Colonic mucosa (tissue), 4 donors: ENCODE measurements at regions of chr11 and their contacts with region 1.

Region 1: GRCh38 chr11:69918938-69919650 is 99.9 kb upstream of the FGF3 start:
- DNase-seq: peak; percentile 73
- H3K4me3 ChIP-seq: no peak overlapping the region
- H3K27ac ChIP-seq: no peak overlapping the region
- H3K4me1 ChIP-seq: no peaks in the 10 kb centered on the region
- H3K27me3 ChIP-seq: no peaks in the 10 kb centered on the region
- CTCF ChIP-seq: peak; percentile 98

Region 2: DNA sequence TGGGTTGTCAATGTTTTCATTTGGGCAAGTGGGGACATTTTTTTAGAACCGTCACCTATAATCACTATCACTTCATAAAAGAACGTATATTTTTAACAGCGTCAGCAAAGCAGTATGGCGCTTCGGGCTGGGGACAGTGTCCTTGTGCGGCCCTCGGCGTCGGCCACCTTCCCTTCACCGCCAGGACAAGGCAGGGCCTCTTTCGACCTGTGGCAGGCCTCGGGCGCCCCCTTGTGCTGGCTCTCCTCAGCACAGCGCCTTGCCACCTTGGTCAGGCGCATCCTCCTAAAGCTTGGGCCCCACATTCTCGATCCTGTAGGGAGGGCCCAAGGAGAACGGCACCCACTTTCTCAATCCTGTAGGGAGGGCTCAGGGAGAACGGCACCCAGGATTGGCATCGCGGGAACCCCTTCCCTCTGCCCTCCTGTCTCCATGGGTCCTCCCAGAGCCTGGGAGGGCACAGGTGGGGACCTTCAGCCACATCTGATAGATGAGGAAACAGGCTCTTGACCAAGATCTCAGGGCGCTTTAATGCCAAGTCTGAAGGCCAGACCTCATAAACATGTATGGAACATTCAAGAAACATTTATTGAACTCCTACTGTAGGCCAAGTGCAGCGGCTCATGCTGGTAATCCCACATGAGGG is 272.5 kb after region 1 on chr11:
- intact Hi-C with region 1: loop called (anchors 2 kb)
- DNase-seq: peak; percentile 72
- H3K4me3 ChIP-seq: no peak overlapping the region
- H3K27ac ChIP-seq: no peak overlapping the region
- H3K4me1 ChIP-seq: no peaks in the 10 kb centered on the region
- H3K27me3 ChIP-seq: no peaks in the 10 kb centered on the region
- CTCF ChIP-seq: peak; percentile 85